Colonic mucosa (tissue), 4 donors: ENCODE measurements at regions of chr5 and their contacts with region 1.

Region 1: GRCh38 chr5:81506900-81507588 is 113.1 kb upstream of the ACOT12 start:
- DNase-seq: peak; percentile 48
- H3K4me3 ChIP-seq: no peak overlapping the region
- H3K27ac ChIP-seq: no peak overlapping the region
- H3K4me1 ChIP-seq: no peaks in the 10 kb centered on the region
- H3K27me3 ChIP-seq: no peaks in the 10 kb centered on the region
- CTCF ChIP-seq: peak; percentile 64

Region 2: DNA sequence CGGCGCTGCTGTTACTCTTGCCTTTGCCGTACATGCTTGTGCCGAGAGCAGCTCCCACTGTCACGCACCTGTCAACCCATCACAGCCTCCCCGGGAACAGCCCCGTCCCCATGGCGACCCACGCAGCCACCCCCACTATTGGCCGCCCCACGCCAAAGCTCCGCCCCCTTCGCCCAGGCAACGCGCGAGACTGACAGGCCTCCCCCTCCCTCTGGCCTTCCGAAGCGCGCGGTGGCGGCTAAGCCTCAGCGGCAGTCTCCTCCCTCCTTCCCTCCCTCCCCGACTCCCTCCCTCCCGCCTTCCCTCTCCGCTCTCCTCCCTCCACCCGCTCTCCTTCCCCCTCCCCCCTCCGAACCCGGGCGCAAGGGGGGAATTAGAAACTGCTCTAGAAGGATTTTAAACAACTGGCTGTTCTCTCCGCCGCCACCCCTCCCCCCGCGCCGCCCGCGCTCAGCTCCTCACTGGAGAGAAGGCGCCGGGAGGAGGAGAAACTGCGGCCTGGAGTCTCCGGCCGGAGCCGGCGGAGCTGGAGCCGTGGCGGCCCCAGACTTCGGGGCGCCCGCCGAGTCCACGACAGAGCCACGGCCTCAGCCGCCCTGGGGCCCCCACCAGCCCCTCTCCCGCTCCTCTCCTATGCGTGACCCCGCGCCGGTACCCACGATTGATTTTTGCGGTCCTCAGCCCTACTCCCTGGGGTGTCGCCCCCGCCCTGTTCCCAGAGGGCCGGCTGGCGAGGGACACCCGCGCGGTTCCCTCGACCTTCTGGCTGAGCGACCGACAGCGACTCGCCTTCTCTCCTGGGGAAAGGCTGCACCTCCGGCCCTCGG is 244.2 kb after region 1 on chr5 and contains the start of gene SSBP2:
- intact Hi-C with region 1: loop called (anchors 5 kb)
- DNase-seq: peak; percentile 100
- H3K4me3 ChIP-seq: peak within 1 kb of the TSS; percentile 64
- H3K27ac ChIP-seq: peak within 1 kb of the TSS; percentile 84
- H3K4me1 ChIP-seq: no peaks in the 10 kb centered on the region
- H3K27me3 ChIP-seq: no peaks in the 10 kb centered on the region
- CTCF ChIP-seq: no peak
- total RNA-seq, gene SSBP2: 11.1 to 28.0 TPM

Region 3: DNA sequence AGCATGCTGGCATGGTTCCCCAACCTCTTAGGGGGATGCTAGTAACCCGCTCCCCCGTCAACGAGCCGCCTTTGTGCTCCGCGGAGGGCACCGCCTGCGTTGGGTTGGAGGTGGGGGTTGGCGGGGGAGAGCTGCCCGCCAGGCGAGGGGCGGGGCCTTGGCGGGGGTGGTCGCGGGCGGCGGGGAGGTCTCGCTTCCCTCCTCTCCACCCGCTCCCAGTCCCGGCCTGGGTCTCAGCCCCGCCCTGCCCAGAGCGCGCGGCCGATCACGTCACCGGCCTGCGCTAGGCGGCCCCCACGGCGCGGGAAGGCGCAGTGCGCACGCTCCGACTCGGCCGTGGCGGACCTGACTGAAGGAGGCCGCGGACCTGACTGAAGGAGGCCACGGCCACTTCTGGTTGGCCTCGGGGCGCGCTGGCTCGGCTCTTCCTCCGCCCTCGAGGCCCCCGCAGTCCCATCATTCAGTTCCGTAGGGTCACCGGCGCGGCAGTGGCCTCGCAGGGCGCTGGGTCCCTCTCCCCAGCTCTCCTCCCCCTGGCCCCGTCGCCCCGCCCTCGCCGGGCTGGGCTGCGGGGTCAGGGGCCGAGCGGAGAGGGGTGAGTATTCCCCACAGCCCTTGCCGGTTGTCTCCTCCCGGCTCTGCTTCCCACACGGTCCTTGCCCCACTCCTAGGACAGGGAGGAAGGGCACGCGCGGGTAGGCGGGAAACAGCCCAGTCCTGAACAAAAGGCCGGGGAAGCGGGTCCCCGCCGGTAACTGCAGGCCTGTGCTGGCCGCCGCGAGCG is 464.9 kb after region 1 on chr5 and contains the start of gene ATG10:
- intact Hi-C with region 1: loop called (anchors 10 kb)
- DNase-seq: peak; percentile 91
- H3K4me3 ChIP-seq: peak within 1 kb of the TSS; percentile 60
- H3K27ac ChIP-seq: peak within 1 kb of the TSS; percentile 96
- H3K4me1 ChIP-seq: no peaks in the 10 kb centered on the region
- H3K27me3 ChIP-seq: no peaks in the 10 kb centered on the region
- CTCF ChIP-seq: no peak
- total RNA-seq, gene ATG10: 6.8 to 8.2 TPM

Region 4: GRCh38 chr5:82174128-82174918 is 667.3 kb after region 1 on chr5:
- intact Hi-C with region 1: loop called (anchors 5 kb)
- DNase-seq: peak; percentile 61
- H3K4me3 ChIP-seq: no peak overlapping the region
- H3K27ac ChIP-seq: no peak overlapping the region
- H3K4me1 ChIP-seq: no peaks in the 10 kb centered on the region
- H3K27me3 ChIP-seq: no peaks in the 10 kb centered on the region
- CTCF ChIP-seq: peak; percentile 48